ENCODE measurements at regions of chr2 and their contacts with region 1.

Region 1: GRCh38 chr2:71299507-71299906 is 32.1 kb upstream of the ZNF638 start:
- DNase-seq: peak; percentile 40
- ATAC-seq: no peak
- H3K4me3 ChIP-seq: no peak overlapping the region
- H3K27ac ChIP-seq: no peak overlapping the region
- H3K4me1 ChIP-seq: no peaks in the 10 kb centered on the region
- H3K27me3 ChIP-seq: no peaks in the 10 kb centered on the region; a peak in 1 of 5 replicates
- CTCF ChIP-seq: peak; percentile 71
- EP300 ChIP-seq: no peak
- POLR2A ChIP-seq: no peak
- RAD21 ChIP-seq: peak; percentile 49; the same call in 1 of the 2 replicates

Region 2: DNA sequence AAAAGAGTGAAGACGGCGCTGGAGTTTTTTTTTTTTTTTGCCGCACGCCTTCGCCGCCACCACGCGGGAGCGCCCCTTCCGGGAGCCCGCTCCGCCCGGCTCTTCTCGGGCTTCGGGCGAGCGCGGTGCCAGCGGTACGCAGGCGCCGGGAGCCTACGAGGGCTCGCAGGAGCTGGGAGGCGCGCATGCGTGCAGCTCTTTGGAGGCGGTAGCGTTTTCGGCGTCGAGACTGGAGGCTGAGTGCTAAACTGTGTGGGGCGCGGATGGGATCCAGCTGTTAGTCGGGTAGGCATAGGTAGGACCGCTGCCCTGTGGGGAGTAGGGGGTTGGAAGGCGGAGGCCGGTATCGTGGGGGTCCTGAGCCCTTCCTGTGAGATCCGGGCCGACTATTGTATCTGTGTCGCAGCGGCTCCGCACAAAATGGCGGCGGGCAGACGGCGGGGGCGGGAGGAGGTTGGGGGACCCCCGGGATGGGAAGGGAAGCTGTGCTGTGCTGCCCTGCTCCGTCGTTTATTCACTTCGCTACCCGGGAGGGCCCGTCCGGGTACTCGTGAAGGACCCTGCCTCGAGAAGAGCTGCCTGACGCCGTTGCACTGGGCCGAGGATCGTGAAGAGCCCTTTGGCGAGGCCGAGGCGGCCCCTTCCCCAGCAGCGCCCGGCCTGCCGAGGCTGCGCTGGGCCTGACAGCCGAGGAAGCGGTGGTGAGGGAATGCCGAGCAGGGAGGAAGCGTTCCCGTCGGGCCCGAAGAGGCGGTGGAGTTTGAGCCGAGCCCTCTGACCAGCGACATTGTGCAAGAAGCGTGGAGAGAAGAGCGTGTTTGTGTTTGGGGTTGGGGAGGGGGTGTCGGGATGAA is 32.3 kb after region 1 on chr2 and contains the start of gene ZNF638:
- CTCF ChIA-PET with region 1: interaction called, 5 read pairs
- POLR2A ChIA-PET with region 1: interaction called, 11 read pairs
- in situ Hi-C with region 1: no loop called
- intact Hi-C with region 1: no loop called
- DNase-seq: peak; percentile 90
- ATAC-seq: peak; percentile 96
- H3K4me3 ChIP-seq: peak within 1 kb of the TSS; percentile 93 to 99 (median 96)
- H3K27ac ChIP-seq: peak within 1 kb of the TSS; percentile 96
- H3K4me1 ChIP-seq: peaks cover 59% of the 10 kb centered on the region
- H3K27me3 ChIP-seq: peaks cover 0 to 5% of the 10 kb centered on the region in 2 experiments; a peak in 1 of 5 replicates
- CTCF ChIP-seq: peak; percentile 84
- EP300 ChIP-seq: peak; percentile 11 to 51; a peak in 3 of 4 replicates
- POLR2A ChIP-seq: peak; percentile 78 to 93
- RAD21 ChIP-seq: peak; percentile 48
- total RNA-seq, gene ZNF638: 133 and 144 TPM in 2 replicates

Region 3: GRCh38 chr2:71505086-71505769 is 205.7 kb after region 1 on chr2:
- CTCF ChIA-PET with region 1: interaction called, 80 read pairs
- POLR2A ChIA-PET with region 1: interaction called, 8 read pairs
- in situ Hi-C with region 1: loop called (anchors 5 kb)
- intact Hi-C with region 1: loop called (anchors 1 kb)
- DNase-seq: no peak
- ATAC-seq: no peak; the same call in 2 of the 3 replicates
- H3K4me3 ChIP-seq: no peak overlapping the region
- H3K27ac ChIP-seq: no peak overlapping the region
- H3K4me1 ChIP-seq: no peaks in the 10 kb centered on the region
- H3K27me3 ChIP-seq: peaks cover 0 to 4% of the 10 kb centered on the region in 2 experiments; a peak in 2 of 5 replicates
- CTCF ChIP-seq: no peak
- EP300 ChIP-seq: no peak
- POLR2A ChIP-seq: no peak
- RAD21 ChIP-seq: no peak

Region 4: DNA sequence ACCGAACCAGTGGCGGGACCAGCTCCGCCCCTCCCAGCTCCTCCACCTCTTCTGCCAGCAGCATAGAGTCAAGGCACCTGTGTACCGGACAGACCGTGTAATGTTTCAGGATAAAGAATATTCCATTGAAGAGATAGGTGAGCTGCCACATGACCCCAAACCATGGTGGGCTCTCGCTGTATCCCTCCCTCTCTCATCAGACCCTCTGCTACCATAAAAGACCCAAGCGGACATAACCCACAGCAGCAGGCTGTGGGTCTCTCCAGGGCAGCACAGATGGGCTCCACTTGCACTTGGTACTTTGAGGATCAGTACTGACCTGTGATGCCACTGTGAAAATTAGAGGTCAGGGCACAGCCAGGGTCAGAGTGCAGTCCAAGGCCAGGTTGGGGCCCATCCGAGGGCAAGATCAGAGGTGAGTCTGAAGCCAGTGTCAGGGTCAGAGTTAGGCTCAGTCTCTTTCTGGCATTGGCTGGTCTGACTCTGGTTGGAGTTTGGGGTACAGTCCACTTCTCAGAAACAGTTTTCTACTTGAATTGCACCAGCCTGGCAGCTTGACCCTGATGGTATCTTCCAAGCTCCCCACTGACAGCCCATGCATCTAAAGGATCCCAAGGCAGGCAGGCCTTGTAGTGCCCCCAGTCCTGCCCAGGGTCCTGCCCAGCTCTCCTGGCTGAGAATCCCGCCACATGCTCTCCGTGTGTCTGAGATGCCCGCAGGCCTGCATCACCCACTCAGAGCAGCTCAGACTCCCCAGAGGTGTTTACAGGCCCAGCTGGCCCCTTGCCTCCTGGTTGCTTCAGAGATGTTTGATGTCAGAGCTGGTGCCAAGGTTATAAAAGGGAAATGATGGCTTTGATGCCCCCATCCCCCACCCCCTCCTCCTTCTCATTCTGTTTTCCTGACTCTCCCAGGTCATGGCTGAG is 365.9 kb after region 1 on chr2:
- CTCF ChIA-PET with region 1: no interaction called
- POLR2A ChIA-PET with region 1: no interaction called
- in situ Hi-C with region 1: no loop called
- intact Hi-C with region 1: no loop called
- DNase-seq: no peak
- ATAC-seq: no peak
- H3K4me3 ChIP-seq: no peak overlapping the region
- H3K27ac ChIP-seq: no peak overlapping the region
- H3K4me1 ChIP-seq: no peaks in the 10 kb centered on the region
- H3K27me3 ChIP-seq: no peaks in the 10 kb centered on the region
- CTCF ChIP-seq: no peak
- EP300 ChIP-seq: no peak
- POLR2A ChIP-seq: no peak
- RAD21 ChIP-seq: no peak

Measured in HepG2 (cell line).